Activated CD4-positive, alpha-beta T cell treated with anti-CD3 and anti-CD28 coated beads for 36 hours (primary cell): ENCODE measurements at regions of chr3 and their contacts with region 1.

Region 1: DNA sequence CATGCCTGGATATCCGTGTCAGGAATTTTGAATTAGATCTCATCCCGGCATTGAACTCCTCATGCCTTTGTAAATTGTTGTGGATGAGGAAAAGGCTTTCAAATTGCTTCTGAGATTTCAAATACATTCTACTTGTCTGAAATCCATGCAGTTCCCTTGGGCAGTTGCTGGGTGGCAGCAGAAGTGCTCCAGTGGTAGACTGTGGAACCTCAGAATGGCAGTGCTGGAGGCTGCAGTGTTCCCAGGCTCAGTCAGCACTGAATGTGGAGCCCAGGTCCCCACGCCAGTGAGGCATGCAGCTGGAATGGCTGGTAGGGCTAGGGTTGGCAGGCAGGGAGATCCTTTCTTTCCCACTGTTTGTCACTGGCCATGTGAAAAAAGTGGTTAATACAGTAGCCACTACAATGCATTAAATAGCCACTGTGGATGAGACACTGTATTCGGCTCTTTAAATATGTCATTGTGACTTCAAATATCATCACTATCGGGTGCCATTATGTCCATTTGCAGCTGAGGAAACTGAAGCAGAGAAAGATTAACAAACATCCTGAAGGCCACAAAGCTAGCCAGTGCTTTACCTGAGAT is 98.6 kb downstream of the TPRG1 start:
- DNase-seq: peak; percentile 67
- ATAC-seq: peak; percentile 80
- H3K4me3 Mint-ChIP-seq: no peak overlapping the region
- H3K27ac Mint-ChIP-seq: no peak overlapping the region
- H3K4me1 Mint-ChIP-seq: peaks cover 18% of the 10 kb centered on the region
- H3K27me3 Mint-ChIP-seq: no peaks in the 10 kb centered on the region

Region 2: DNA sequence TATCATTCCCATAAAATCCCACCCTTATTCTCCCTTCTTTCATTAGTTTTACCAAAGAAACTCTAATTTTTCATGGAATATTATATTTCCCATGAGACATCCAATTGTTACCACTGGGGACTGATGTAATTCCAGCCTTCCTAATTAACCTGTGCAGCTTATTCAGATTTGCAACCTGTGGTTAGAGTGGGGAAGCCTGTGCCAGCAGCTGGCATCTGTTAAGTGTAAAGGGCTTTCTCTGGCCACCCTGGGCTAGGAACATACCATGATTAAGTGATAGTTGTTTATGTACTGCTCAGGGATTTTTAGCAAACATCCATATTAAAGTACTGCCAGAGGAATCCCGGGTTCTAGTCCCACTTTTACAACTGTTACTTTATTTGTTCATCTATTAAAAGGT is 20.4 kb before region 1 on chr3:
- CTCF ChIA-PET with region 1: no interaction called
- POLR2A ChIA-PET with region 1: no interaction called
- intact Hi-C with region 1: no loop called
- DNase-seq: no peak
- ATAC-seq: no peak
- H3K4me3 Mint-ChIP-seq: no peak overlapping the region
- H3K27ac Mint-ChIP-seq: no peak overlapping the region
- H3K4me1 Mint-ChIP-seq: no peaks in the 10 kb centered on the region
- H3K27me3 Mint-ChIP-seq: no peaks in the 10 kb centered on the region

Region 3: DNA sequence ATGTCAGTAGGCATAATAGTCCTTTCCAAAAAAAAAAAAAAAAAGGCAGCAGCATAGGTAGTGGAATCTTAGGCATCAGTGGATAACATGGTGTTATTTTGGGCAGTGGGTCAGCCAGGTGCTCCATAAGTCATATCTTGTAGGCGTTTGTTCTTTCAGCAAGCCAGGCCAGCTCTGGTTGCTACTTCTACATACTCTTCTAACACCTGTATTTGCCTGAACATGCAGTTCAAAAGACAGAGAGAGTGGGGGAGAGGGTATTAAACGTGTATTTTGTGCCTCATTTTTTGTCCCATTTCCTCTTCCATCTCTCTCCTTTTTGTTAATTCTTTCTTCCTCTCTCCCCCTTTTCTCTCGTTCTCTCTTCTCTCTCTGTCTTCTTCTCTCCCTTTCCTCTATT is 11.8 kb after region 1 on chr3:
- CTCF ChIA-PET with region 1: interaction called, 18 read pairs
- POLR2A ChIA-PET with region 1: no interaction called
- intact Hi-C with region 1: no loop called
- DNase-seq: no peak
- ATAC-seq: no peak
- H3K4me3 Mint-ChIP-seq: no peak overlapping the region
- H3K27ac Mint-ChIP-seq: no peak overlapping the region
- H3K4me1 Mint-ChIP-seq: peaks cover 34% of the 10 kb centered on the region
- H3K27me3 Mint-ChIP-seq: no peaks in the 10 kb centered on the region

Region 4: DNA sequence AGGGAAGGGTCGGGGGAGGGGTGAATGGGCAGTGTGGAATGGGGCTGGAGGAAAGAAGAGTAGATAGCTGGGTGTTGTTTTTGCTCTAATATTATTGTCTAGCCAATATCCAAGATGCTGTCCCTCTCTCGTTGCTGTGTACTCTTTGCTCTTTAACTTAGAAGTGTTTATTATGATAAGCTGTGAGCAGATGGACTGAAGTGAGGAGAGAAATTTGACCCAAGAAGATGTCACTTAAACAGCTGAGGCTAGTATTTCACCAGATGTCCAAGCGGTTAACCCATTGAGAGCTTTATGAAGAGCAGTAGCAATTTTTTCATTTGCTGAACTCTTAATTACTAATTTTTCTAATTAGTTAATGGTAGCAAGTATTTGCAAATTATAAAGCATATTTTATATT is 148.7 kb after region 1 on chr3:
- CTCF ChIA-PET with region 1: interaction called, 5 read pairs
- POLR2A ChIA-PET with region 1: no interaction called
- intact Hi-C with region 1: loop called in 1 of 2 experiments (anchors 10 kb)
- DNase-seq: no peak
- ATAC-seq: no peak
- H3K4me3 Mint-ChIP-seq: no peak overlapping the region
- H3K27ac Mint-ChIP-seq: no peak overlapping the region
- H3K4me1 Mint-ChIP-seq: peaks cover 5% of the 10 kb centered on the region
- H3K27me3 Mint-ChIP-seq: no peaks in the 10 kb centered on the region

Region 5: DNA sequence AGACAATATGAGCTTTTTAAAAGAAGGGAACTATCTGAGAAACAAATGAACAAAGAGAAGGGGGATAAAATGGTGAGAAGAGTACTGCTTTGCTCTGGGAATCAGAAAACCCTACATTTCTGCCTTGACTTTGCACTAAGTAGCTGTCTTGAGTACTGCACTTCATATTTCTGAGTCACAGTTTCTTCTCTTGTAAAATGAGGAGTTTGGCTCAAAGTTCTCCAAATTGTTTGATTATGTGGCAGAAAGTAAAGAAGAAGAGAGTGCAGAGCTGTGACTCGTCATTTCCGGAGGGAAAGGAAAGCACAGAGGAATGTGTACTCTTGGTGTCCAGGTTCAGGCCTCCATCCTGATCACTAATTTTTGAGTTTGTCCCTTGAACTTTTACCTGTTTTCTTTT is 415.5 kb after region 1 on chr3:
- CTCF ChIA-PET with region 1: no interaction called
- POLR2A ChIA-PET with region 1: no interaction called
- intact Hi-C with region 1: loop called in 1 of 2 experiments (anchors 5 kb)
- DNase-seq: peak; percentile 8
- ATAC-seq: peak; percentile 45
- H3K4me3 Mint-ChIP-seq: no peak overlapping the region
- H3K27ac Mint-ChIP-seq: no peak overlapping the region
- H3K4me1 Mint-ChIP-seq: peaks cover 25% of the 10 kb centered on the region
- H3K27me3 Mint-ChIP-seq: peaks cover 4% of the 10 kb centered on the region

Region 6: GRCh38 chr3:189824629-189825312 is 554.4 kb after region 1 on chr3:
- CTCF ChIA-PET with region 1: no interaction called
- POLR2A ChIA-PET with region 1: no interaction called
- intact Hi-C with region 1: loop called in 1 of 2 experiments (anchors 10 kb)
- DNase-seq: no peak
- ATAC-seq: no peak
- H3K4me3 Mint-ChIP-seq: no peak overlapping the region
- H3K27ac Mint-ChIP-seq: no peak overlapping the region
- H3K4me1 Mint-ChIP-seq: peaks cover 3% of the 10 kb centered on the region
- H3K27me3 Mint-ChIP-seq: peaks cover 1% of the 10 kb centered on the region